Vagina (tissue), 2 donors: ENCODE measurements at regions of chr5 and their contacts with region 1.

Region 1: GRCh38 chr5:78964887-78965286 is 20.2 kb downstream of the ARSB start:
- DNase-seq: no peak
- H3K4me3 ChIP-seq: no peak overlapping the region
- H3K27ac ChIP-seq: no peak overlapping the region
- H3K4me1 ChIP-seq: no peaks in the 10 kb centered on the region
- H3K27me3 ChIP-seq: no peaks in the 10 kb centered on the region
- CTCF ChIP-seq: peak in 2 of 3 experiments; percentile 32 to 54
- POLR2A ChIP-seq: no peak

Region 2: GRCh38 chr5:78467752-78468357 is 497.0 kb before region 1 on chr5:
- intact Hi-C with region 1: loop called (anchors 10 kb)
- DNase-seq: no peak
- H3K4me3 ChIP-seq: no peak overlapping the region
- H3K27ac ChIP-seq: no peak overlapping the region
- H3K4me1 ChIP-seq: no peaks in the 10 kb centered on the region
- H3K27me3 ChIP-seq: no peaks in the 10 kb centered on the region
- CTCF ChIP-seq: peak; percentile 44 to 65 (median 63)
- POLR2A ChIP-seq: no peak

Region 3: GRCh38 chr5:78841767-78842166 is 123.1 kb before region 1 on chr5:
- intact Hi-C with region 1: no loop called
- DNase-seq: no peak
- H3K4me3 ChIP-seq: no peak overlapping the region
- H3K27ac ChIP-seq: no peak overlapping the region
- H3K4me1 ChIP-seq: no peaks in the 10 kb centered on the region
- H3K27me3 ChIP-seq: no peaks in the 10 kb centered on the region
- CTCF ChIP-seq: no peak
- POLR2A ChIP-seq: no peak

Region 4: DNA sequence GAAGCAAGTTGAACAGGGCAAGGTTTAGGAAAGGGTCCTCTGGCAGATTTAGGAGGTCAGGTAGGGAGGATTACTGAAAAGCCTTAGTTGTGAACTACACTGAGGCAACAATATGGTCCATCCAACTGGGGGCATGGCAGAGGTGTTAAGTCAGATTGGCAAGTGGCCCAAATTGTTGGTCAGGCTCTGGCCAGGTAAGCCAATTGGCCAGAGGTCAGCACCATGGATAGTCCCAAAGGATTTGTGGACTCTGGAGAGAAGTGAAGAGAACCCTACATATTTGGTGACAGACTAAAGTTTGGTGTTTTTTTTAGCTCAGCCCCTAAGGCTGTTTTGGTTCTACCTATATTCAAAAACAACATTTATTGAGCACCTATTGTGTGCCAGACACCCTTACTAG is 1956.1 kb after region 1 on chr5:
- intact Hi-C with region 1: no loop called
- DNase-seq: no peak
- H3K4me3 ChIP-seq: no peak overlapping the region
- H3K27ac ChIP-seq: no peak overlapping the region
- H3K4me1 ChIP-seq: peaks cover 18% of the 10 kb centered on the region
- H3K27me3 ChIP-seq: no peaks in the 10 kb centered on the region
- CTCF ChIP-seq: no peak
- POLR2A ChIP-seq: no peak